ENCODE measurements at regions of chr3 and their contacts with region 1.

Region 1: GRCh38 chr3:143775459-143775858 is 72.8 kb downstream of the SLC9A9 start:
- DNase-seq: peak; percentile 54
- H3K4me3 ChIP-seq: no peak overlapping the region
- H3K27ac ChIP-seq: no peak overlapping the region
- H3K4me1 ChIP-seq: no peaks in the 10 kb centered on the region
- CTCF ChIP-seq: peak; percentile 85

Region 2: DNA sequence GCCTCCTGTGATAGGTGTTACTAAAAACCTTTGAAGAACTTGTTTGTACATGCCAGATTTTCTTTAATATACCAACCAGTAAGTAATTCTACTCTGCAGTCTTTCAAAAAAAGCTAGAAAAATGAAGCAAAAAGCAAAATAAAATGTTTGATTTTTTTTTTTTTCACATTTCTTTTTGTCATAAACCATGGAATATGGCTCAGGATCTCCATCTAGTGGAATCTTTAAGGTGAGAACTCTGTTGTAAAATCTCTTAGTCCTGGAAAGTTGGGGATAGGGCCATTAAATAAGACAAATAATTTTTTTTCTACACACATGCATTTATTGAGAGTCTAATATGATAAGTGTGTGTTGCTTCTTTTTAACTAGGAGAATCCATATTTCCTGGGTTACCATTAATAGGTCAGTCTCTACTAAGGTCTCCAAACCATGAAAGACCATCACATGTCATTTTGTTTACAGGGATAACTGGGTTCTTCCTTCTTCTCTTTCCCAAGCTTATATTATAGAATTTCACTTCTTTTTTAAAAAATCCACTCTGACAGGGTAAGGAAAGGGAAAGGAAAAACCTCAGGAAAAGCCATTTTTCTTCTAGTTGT is 11.8 kb before region 1 on chr3:
- CTCF ChIA-PET with region 1: no interaction called
- POLR2A ChIA-PET with region 1: no interaction called
- intact Hi-C with region 1: no loop called
- DNase-seq: no peak
- H3K4me3 ChIP-seq: no peak overlapping the region
- H3K27ac ChIP-seq: no peak overlapping the region
- H3K4me1 ChIP-seq: no peaks in the 10 kb centered on the region
- CTCF ChIP-seq: peak; percentile 48

Region 3: DNA sequence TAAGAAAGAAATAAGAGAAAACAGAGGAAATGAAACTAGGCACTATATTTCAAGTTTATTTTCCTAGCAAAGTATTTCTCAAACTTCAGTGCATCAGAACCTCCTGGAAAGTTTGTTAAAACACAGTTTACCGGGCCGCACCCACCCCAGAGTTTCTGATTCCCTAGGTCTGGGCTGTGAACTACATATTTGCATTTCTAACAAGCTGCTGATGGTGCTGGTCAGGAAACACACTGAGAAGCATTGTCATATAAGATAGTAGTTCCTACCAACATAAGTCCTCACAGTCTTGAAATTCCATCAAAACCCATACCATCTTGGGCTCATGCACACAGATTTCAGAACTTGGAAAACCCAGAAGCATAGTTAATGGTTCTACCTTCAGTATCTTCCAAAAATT is 64.5 kb after region 1 on chr3:
- CTCF ChIA-PET with region 1: no interaction called
- POLR2A ChIA-PET with region 1: no interaction called
- intact Hi-C with region 1: no loop called
- DNase-seq: no peak
- H3K4me3 ChIP-seq: no peak overlapping the region
- H3K27ac ChIP-seq: no peak overlapping the region
- H3K4me1 ChIP-seq: peaks cover 3% of the 10 kb centered on the region
- CTCF ChIP-seq: no peak

Region 4: DNA sequence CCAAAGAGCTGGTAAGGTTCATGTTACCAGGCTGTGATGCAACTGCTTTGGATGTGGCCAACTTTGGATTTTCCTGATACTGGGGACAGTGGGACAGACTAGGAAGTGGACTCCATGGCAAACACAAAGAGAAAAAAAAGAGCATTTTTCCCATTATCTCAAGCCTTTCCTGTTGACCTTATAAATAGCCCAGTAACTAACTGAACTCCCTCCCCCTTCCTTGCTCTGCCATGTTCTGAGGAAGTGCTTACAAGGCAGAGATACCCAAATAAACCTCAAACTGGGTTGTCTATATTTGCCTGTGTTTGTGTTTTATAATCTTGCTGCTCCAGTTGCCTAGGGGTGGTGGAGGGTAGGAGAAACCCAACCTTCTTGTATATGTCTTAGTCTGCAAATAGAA is 100.1 kb after region 1 on chr3:
- CTCF ChIA-PET with region 1: no interaction called
- POLR2A ChIA-PET with region 1: interaction called, 3 read pairs
- intact Hi-C with region 1: loop called (anchors 5 kb)
- DNase-seq: no peak
- H3K4me3 ChIP-seq: no peak overlapping the region
- H3K27ac ChIP-seq: no peak overlapping the region
- H3K4me1 ChIP-seq: no peaks in the 10 kb centered on the region
- CTCF ChIP-seq: no peak

Region 5: GRCh38 chr3:143951351-143951971 is 176.0 kb after region 1 on chr3:
- CTCF ChIA-PET with region 1: no interaction called
- POLR2A ChIA-PET with region 1: no interaction called
- intact Hi-C with region 1: loop called (anchors 10 kb)
- DNase-seq: peak; percentile 51
- H3K4me3 ChIP-seq: no peak overlapping the region
- H3K27ac ChIP-seq: no peak overlapping the region
- H3K4me1 ChIP-seq: no peaks in the 10 kb centered on the region
- CTCF ChIP-seq: peak; percentile 87

Measured in OCI-LY7 (cell line).